ENCODE measurements at regions of chr11 and their contacts with region 1.

Region 1: DNA sequence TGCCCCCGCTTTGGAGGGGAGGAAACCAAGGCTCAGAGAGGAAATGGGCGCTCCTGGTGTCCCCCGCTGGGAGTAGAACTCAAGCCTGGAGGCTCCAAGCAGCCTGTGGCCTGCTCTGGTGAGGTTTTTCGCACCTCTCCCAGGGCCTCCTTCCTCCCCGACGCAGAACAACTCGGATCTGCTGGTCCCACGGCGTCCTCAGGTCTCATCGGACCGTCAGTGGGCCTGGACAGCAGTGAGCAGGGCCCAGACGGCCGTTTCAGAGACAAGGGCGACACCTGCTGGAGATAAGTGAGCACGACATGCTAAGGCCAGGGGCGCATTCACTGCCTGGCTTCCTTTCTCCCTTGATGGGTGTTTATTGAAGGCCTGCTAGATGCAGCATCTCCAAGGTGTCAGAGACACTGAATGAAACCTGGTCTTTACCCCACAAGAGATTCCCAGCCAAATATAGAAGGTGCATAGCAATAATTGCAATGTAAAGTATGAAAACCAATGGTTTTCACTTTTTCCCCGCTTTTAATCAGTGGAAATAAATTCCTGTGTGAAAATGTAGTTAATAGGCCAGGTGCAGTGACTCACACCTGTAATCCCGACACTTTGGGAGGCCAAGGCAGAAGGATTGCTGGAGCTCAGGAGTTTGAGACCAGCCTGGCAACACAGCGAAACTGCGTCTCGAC is 26.9 kb upstream of the CD82 start:
- DNase-seq: peak; percentile 76 to 83 (median 80)
- ATAC-seq: peak; percentile 92 to 94 (median 92)
- H3K4me3 ChIP-seq: peak overlapping the region in 3 of 12 donors; percentile 5 to 26 (median 11)
- H3K27ac ChIP-seq: no peak overlapping the region
- H3K4me1 ChIP-seq: peaks cover 0 to 9% (median 0%) of the 10 kb centered on the region in 12 donors
- H3K27me3 ChIP-seq: no peaks in the 10 kb centered on the region
- CTCF ChIP-seq: peak; percentile 90 to 99 (median 96)
- POLR2A ChIP-seq: no peak

Region 2: GRCh38 chr11:44095506-44096394 is 442.8 kb before region 1 on chr11 and contains the start of gene EXT2:
- intact Hi-C with region 1: loop called (anchors 1 to 10 kb)
- DNase-seq: peak; percentile 88 to 96 (median 92)
- ATAC-seq: peak; percentile 94 to 98 (median 97)
- H3K4me3 ChIP-seq: peak within 1 kb of the TSS; percentile 70 to 99 (median 90)
- H3K27ac ChIP-seq: peak within 1 kb of the TSS; percentile 62 to 95 (median 84)
- H3K4me1 ChIP-seq: peaks cover 0 to 29% (median 22%) of the 10 kb centered on the region in 12 donors
- H3K27me3 ChIP-seq: no peaks in the 10 kb centered on the region
- CTCF ChIP-seq: peak; percentile 78 to 96 (median 92)
- POLR2A ChIP-seq: peak in 1 of 2 donors; percentile 66
- total RNA-seq, gene EXT2: 24.3 to 41.9 (median 31.9) TPM

Region 3: DNA sequence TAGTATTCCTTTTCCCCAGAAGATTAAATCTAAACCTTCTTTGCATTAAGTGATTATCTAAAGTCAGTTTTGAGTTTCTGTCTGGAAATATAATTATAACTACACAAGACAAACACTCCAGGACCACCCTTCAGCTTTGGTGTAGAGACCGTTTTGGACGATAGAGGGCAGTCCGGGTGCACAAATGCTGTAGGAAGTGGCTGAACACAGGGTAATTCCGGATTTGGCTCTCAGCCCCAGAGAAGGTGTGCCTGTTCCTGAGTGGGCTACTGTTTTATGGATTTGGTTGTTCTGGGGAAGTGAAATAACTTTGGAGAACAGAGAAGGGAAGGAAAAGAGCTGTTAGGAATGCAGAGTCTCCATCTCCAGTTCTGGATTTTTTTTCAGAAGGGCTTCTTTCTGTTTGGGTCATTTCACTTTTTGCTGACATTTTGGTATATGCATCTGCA is 428.3 kb before region 1 on chr11:
- intact Hi-C with region 1: loop called in 8 of 10 experiments (anchors 1 to 10 kb)
- DNase-seq: peak; percentile 46 to 77 (median 70)
- ATAC-seq: peak; percentile 53 to 85 (median 78)
- H3K4me3 ChIP-seq: no peak overlapping the region
- H3K27ac ChIP-seq: no peak overlapping the region
- H3K4me1 ChIP-seq: peaks cover 7 to 38% (median 19%) of the 10 kb centered on the region in 12 donors
- H3K27me3 ChIP-seq: no peaks in the 10 kb centered on the region
- CTCF ChIP-seq: peak; percentile 69 to 88 (median 78)
- POLR2A ChIP-seq: no peak

Region 4: GRCh38 chr11:44661311-44661717 is 122.8 kb after region 1 on chr11:
- intact Hi-C with region 1: no loop called
- DNase-seq: peak in 1 of 5 donors; percentile 57
- ATAC-seq: peak in 2 of 4 donors; percentile 19 to 23
- H3K4me3 ChIP-seq: no peak overlapping the region
- H3K27ac ChIP-seq: no peak overlapping the region
- H3K4me1 ChIP-seq: peaks cover 0 to 29% (median 3%) of the 10 kb centered on the region in 12 donors
- H3K27me3 ChIP-seq: no peaks in the 10 kb centered on the region
- CTCF ChIP-seq: no peak
- POLR2A ChIP-seq: no peak

Region 5: DNA sequence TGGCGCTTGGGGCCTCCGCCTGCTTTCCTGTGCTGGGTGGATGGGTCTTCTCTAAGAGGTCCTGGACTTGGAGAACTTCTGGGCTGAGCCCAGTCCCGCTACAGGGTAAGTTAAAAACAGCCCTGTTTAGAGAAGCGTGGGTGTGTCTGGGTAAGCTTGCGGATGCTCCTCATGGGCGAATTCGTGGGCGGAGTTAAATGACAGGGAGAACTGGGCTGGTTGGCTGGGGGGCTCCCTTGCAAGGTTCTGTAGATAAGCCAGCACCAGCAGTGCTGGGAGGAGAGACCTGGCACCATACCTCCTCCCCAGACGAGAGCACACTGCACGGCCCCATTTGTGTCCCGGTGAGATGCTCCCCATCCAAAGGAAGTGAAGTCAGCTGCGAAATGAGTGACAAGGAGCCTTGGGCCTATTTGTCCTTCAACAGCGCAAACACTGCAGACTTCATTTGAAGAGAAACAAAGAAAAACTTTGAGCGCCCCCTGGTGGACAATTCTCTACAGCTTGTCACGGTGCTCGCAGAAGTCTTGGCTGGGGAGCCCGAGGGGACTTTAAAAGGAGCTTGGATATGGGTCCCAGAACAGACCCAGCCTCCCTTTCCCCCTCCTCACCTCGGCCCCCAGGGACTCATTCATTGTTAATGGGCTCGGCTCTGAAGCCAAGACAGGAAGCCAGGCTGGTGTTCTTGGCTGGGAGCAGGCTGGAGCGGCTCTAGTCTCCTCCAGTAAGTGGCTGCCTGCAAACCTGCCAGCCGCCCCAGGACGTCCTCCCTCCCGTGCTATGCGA is 372.7 kb after region 1 on chr11:
- intact Hi-C with region 1: no loop called
- DNase-seq: peak; percentile 81 to 91 (median 89)
- ATAC-seq: peak; percentile 67 to 82 (median 71)
- H3K4me3 ChIP-seq: peak overlapping the region in 3 of 12 donors; percentile 8 to 29 (median 8)
- H3K27ac ChIP-seq: peak overlapping the region in 7 of 12 donors; percentile 6 to 58 (median 31)
- H3K4me1 ChIP-seq: peaks cover 0 to 47% (median 26%) of the 10 kb centered on the region in 12 donors
- H3K27me3 ChIP-seq: no peaks in the 10 kb centered on the region
- CTCF ChIP-seq: peak; percentile 84 to 96 (median 90)
- POLR2A ChIP-seq: no peak

Measured in heart left ventricle (tissue), 16 donors.